HepG2 (cell line): ENCODE measurements at regions of chr14 and their contacts with region 1.

Region 1: DNA sequence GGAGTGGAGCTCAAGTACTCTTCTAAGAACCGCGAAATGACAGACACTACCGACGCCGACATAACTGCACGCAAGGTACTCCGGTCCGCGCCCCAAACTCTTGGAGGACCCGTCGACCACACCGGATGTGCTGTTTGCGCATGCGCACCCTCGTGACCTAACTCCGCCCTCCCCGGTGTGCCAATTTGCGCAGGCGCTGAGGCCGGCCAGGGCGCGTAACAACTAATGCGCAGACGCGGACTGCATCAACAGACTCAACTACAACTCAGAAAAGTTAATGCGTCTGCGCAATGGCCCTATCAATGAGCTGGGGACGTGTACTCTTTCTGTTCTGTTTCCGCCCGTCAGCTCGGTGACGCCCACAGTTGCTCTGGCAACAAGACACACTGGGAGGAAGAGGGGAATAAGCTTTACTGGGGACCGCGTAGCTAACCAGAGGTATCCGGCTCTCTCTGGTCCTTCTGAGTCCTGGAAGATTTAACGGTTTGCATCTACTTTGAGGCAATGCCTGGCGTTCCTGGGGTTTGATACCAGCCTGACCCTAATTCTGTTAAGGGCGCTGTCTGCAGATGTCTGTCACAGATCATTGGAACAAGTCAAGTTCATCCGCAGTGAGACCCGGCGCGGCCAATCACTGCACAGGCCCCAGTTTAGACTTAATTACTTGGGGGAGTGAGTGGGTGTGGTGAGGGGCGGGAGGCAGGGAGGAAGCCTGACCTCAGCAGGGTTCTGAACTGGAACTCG is at the start of gene DAD1:
- DNase-seq: peak; percentile 100
- ATAC-seq: peak; percentile 98
- H3K4me3 ChIP-seq: peak within 1 kb of the TSS; percentile 85 to 92 (median 86)
- H3K27ac ChIP-seq: peak within 1 kb of the TSS; percentile 80
- H3K4me1 ChIP-seq: peaks cover 52% of the 10 kb centered on the region
- H3K27me3 ChIP-seq: peaks cover 0 to 23% of the 10 kb centered on the region in 2 experiments; a peak in 2 of 5 replicates
- CTCF ChIP-seq: no peak
- EP300 ChIP-seq: 0 out of 4 replicates have a peak, but pooled peaks of 1 of the 2 experiments have one; percentile 19
- POLR2A ChIP-seq: peak in 1 of 2 experiments; percentile 97; a peak in 2 of 4 replicates
- RAD21 ChIP-seq: peak; percentile 67; the same call in 1 of the 2 replicates
- total RNA-seq, gene DAD1: 385 and 558 TPM in 2 replicates

Region 2: DNA sequence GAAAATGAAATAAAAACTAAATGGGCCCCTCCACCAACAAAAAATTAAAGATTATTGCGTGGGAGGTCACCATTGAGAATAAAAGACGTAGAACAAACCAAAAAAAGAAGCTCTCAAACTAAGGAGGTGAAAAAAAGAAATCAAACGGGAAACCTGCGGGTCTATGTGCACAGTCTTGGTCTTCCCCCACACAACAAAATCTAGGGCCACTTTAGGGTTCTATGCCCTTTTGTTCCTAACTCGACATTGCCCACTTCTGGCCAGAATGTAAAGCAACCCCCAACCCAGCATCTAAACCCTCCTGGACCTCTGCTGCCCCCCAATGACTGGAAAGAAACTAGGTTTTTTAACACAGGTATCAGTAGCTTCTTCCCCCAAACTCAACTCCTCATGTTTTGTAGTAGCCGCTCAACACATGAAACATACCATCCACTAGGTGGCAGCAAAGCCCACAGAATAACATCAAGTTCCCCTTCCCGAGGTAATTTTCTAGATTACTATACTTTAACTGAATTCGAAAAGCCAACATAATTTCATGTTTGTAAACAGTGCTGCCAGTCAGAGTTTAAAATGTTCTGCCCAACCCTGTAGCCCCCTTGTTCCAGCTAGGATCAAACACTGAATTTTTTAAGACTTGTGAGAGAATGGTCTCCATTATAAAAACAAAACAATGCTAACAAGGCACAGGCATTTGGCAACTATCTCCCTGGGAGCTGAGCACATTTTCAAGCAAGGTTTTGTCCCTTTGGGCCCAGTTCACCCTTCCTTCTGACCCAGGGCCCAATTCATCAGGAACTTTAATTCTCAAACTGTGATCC is 18.9 kb before region 1 on chr14:
- CTCF ChIA-PET with region 1: interaction called, 16 read pairs
- POLR2A ChIA-PET with region 1: interaction called, 62 read pairs
- in situ Hi-C with region 1: no loop called
- intact Hi-C with region 1: loop called (anchors 1 kb)
- DNase-seq: peak; percentile 98
- ATAC-seq: peak; percentile 86
- H3K4me3 ChIP-seq: no peak overlapping the region
- H3K27ac ChIP-seq: peak overlapping the region; percentile 12
- H3K4me1 ChIP-seq: peaks cover 29% of the 10 kb centered on the region
- H3K27me3 ChIP-seq: no peaks in the 10 kb centered on the region
- CTCF ChIP-seq: peak; percentile 97
- EP300 ChIP-seq: no peak; a peak in 1 of 4 replicates
- POLR2A ChIP-seq: no peak
- RAD21 ChIP-seq: peak; percentile 96

Region 3: DNA sequence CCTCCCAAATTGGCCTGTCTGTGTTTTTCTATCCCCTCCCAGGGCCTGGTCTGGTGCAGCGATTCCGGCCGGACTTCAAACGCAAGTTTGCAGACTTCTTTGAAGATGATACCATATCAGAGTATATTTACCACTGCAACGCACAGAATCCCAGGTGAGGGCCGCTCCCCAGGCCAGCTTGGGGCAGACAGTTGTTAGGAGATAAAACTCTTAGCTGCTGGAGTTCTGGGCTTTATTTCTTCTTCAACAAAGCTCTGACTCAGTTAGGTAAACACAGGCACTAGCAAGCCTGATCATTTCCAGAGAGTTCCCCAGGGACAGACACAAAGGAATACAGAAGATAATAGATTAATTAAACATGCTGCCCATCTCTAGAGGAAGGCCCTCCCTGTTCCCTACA is 17.1 kb after region 1 on chr14:
- CTCF ChIA-PET with region 1: no interaction called
- POLR2A ChIA-PET with region 1: interaction called, 139 read pairs
- in situ Hi-C with region 1: no loop called
- intact Hi-C with region 1: no loop called
- DNase-seq: peak; percentile 70
- ATAC-seq: peak; percentile 22; the same call in 1 of the 3 replicates
- H3K4me3 ChIP-seq: no peak overlapping the region
- H3K27ac ChIP-seq: no peak overlapping the region
- H3K4me1 ChIP-seq: peaks cover 9% of the 10 kb centered on the region
- H3K27me3 ChIP-seq: no peaks in the 10 kb centered on the region
- CTCF ChIP-seq: no peak
- EP300 ChIP-seq: no peak; a peak in 1 of 4 replicates
- POLR2A ChIP-seq: no peak
- RAD21 ChIP-seq: no peak

Region 4: DNA sequence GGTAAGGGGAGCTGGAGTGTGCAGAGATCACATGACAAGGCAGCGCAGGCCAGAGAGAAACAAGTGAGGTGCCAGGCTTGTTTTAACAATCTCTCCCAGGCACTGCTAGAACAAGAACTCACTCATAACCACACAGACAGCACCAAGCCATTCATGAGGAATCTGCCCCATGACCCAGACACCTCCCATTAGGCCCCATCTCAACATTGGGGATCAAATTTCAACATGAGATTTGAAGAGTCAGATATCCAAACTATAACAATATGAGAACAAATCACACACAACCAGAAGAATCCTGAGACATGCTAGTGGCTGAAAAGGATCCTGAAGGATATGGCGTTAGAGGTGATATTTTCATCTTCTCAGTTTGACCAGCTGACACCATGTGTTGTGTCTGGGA is 33.0 kb after region 1 on chr14:
- CTCF ChIA-PET with region 1: no interaction called
- POLR2A ChIA-PET with region 1: no interaction called
- in situ Hi-C with region 1: no loop called
- intact Hi-C with region 1: no loop called
- DNase-seq: no peak
- ATAC-seq: no peak; the same call in 1 of the 3 replicates
- H3K4me3 ChIP-seq: no peak overlapping the region
- H3K27ac ChIP-seq: no peak overlapping the region
- H3K4me1 ChIP-seq: no peaks in the 10 kb centered on the region
- H3K27me3 ChIP-seq: no peaks in the 10 kb centered on the region; a peak in 1 of 5 replicates
- CTCF ChIP-seq: no peak
- EP300 ChIP-seq: no peak
- POLR2A ChIP-seq: no peak
- RAD21 ChIP-seq: no peak

Region 5: DNA sequence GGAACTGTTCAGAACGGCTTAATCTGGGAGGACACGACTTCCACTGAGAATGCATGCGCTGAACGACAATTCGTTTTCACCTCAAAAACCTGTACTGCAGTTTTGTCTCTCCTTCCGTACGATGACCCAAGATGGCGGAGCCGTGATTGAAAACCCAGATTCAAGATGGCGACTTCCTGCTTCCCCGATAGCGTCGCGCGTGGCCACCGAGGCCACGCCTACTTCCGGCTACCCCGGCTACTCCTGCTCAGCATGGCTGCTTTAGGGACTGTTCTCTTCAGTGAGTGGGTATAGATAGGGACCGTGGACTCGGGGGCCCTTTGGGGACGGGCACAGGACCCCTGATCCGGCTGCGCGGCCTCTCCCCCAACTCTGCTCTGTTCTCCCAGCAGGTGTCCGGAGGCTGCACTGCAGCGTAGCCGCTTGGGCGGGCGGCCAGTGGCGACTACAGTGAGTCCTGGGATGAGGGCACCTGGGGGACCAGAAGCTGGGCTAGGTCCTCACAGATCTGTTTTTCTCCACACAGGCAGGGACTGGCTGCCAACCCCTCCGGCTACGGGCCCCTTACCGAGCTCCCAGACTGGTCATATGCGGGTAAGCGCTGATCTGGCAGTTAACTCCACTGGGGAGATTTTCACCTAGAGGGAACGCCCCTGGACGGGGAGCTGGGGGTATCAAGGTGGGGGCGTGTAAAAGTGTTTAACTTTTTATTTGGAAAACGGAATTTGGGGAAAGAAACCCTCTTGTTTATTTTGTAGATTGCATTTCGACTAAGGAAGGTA is 240.6 kb after region 1 on chr14 and contains the start of gene MRPL52:
- CTCF ChIA-PET with region 1: no interaction called
- POLR2A ChIA-PET with region 1: interaction called, 11 read pairs
- in situ Hi-C with region 1: no loop called
- intact Hi-C with region 1: no loop called
- DNase-seq: peak; percentile 97
- ATAC-seq: peak; percentile 94
- H3K4me3 ChIP-seq: peak within 1 kb of the TSS; percentile 74 to 97 (median 88)
- H3K27ac ChIP-seq: peak within 1 kb of the TSS; percentile 65
- H3K4me1 ChIP-seq: peaks cover 24% of the 10 kb centered on the region
- H3K27me3 ChIP-seq: no peaks in the 10 kb centered on the region; a peak in 1 of 5 replicates
- CTCF ChIP-seq: peak; percentile 37
- EP300 ChIP-seq: peak in 1 of 2 experiments; percentile 69; a peak in 1 of 4 replicates
- POLR2A ChIP-seq: peak; percentile 91 to 97
- RAD21 ChIP-seq: peak; percentile 53; the same call in 1 of the 2 replicates
- total RNA-seq, gene MRPL52: 329 and 420 TPM in 2 replicates

Region 6: GRCh38 chr14:24442273-24443052 is 1853.2 kb after region 1 on chr14 and contains the start of gene SDR39U1:
- CTCF ChIA-PET with region 1: no interaction called
- POLR2A ChIA-PET with region 1: interaction called, 4 read pairs
- in situ Hi-C with region 1: no loop called
- intact Hi-C with region 1: loop called (anchors 10 kb)
- DNase-seq: peak; percentile 100
- ATAC-seq: peak; percentile 91
- H3K4me3 ChIP-seq: peak within 1 kb of the TSS; percentile 74 to 98 (median 84)
- H3K27ac ChIP-seq: peak within 1 kb of the TSS; percentile 93
- H3K4me1 ChIP-seq: peaks cover 18% of the 10 kb centered on the region
- H3K27me3 ChIP-seq: peaks cover 0 to 5% of the 10 kb centered on the region in 2 experiments; a peak in 1 of 5 replicates
- CTCF ChIP-seq: peak; percentile 50
- EP300 ChIP-seq: 0 out of 4 replicates have a peak, but pooled peaks have one; percentile 44 to 47
- POLR2A ChIP-seq: peak in 1 of 2 experiments; percentile 98; a peak in 2 of 4 replicates
- RAD21 ChIP-seq: no peak; the same call in 1 of the 2 replicates
- total RNA-seq, gene SDR39U1: 25.0 and 34.4 TPM in 2 replicates